ENCODE measurements at regions of chr15 and their contacts with region 1.

Region 1: GRCh38 chr15:55637086-55637485 is 48.9 kb upstream of the PYGO1 start:
- DNase-seq: no peak
- ATAC-seq: no peak
- H3K4me3 ChIP-seq: no peak overlapping the region
- H3K27ac ChIP-seq: no peak overlapping the region
- H3K4me1 ChIP-seq: no peaks in the 10 kb centered on the region
- H3K27me3 ChIP-seq: no peaks in the 10 kb centered on the region
- CTCF ChIP-seq: no peak
- POLR2A ChIP-seq: no peak
- RAD21 ChIP-seq: no peak

Region 2: GRCh38 chr15:55526559-55527036 is 110.5 kb before region 1 on chr15:
- CTCF ChIA-PET with region 1: interaction called, 3 read pairs
- POLR2A ChIA-PET with region 1: no interaction called
- dilution Hi-C with region 1: no loop called
- in situ Hi-C with region 1: loop called (anchors 5 kb)
- intact Hi-C with region 1: loop called (anchors 1 kb)
- DNase-seq: peak; percentile 71
- ATAC-seq: peak; percentile 89
- H3K4me3 ChIP-seq: no peak overlapping the region
- H3K27ac ChIP-seq: no peak overlapping the region
- H3K4me1 ChIP-seq: peaks cover 2% of the 10 kb centered on the region
- H3K27me3 ChIP-seq: peaks cover 6% of the 10 kb centered on the region; the same call in 1 of the 2 replicates
- CTCF ChIP-seq: peak; percentile 70
- POLR2A ChIP-seq: no peak
- RAD21 ChIP-seq: peak; percentile 69

Region 3: DNA sequence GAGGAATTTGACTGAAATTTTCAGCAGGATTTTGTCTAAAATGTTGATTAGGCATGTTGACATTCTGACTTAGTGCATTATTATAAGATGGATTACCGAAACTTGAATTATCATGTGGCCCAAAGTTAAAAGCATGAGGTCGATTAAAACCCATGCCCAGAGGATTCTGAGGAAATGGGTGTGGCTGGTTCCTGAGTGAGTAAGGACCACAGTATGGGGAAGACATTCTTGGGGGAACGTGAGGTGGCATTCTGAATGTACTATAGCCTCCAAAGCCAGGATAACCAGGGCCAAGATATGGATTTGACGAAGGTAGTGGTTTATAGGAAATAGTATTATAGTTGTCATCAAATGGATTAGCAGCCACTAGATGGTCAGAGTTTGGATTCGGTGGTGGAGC is 90.4 kb before region 1 on chr15:
- CTCF ChIA-PET with region 1: no interaction called
- POLR2A ChIA-PET with region 1: no interaction called
- dilution Hi-C with region 1: no loop called
- in situ Hi-C with region 1: no loop called
- intact Hi-C with region 1: no loop called
- DNase-seq: peak; percentile 4
- ATAC-seq: no peak
- H3K4me3 ChIP-seq: no peak overlapping the region
- H3K27ac ChIP-seq: no peak overlapping the region
- H3K4me1 ChIP-seq: no peaks in the 10 kb centered on the region
- H3K27me3 ChIP-seq: no peaks in the 10 kb centered on the region
- CTCF ChIP-seq: no peak
- POLR2A ChIP-seq: no peak
- RAD21 ChIP-seq: no peak

Region 4: GRCh38 chr15:55564347-55565145 is 72.5 kb before region 1 on chr15:
- CTCF ChIA-PET with region 1: no interaction called
- POLR2A ChIA-PET with region 1: no interaction called
- dilution Hi-C with region 1: no loop called
- in situ Hi-C with region 1: no loop called
- intact Hi-C with region 1: no loop called
- DNase-seq: no peak
- ATAC-seq: no peak
- H3K4me3 ChIP-seq: no peak overlapping the region
- H3K27ac ChIP-seq: no peak overlapping the region
- H3K4me1 ChIP-seq: no peaks in the 10 kb centered on the region
- H3K27me3 ChIP-seq: no peaks in the 10 kb centered on the region
- CTCF ChIP-seq: no peak
- POLR2A ChIP-seq: no peak
- RAD21 ChIP-seq: no peak

Region 5: DNA sequence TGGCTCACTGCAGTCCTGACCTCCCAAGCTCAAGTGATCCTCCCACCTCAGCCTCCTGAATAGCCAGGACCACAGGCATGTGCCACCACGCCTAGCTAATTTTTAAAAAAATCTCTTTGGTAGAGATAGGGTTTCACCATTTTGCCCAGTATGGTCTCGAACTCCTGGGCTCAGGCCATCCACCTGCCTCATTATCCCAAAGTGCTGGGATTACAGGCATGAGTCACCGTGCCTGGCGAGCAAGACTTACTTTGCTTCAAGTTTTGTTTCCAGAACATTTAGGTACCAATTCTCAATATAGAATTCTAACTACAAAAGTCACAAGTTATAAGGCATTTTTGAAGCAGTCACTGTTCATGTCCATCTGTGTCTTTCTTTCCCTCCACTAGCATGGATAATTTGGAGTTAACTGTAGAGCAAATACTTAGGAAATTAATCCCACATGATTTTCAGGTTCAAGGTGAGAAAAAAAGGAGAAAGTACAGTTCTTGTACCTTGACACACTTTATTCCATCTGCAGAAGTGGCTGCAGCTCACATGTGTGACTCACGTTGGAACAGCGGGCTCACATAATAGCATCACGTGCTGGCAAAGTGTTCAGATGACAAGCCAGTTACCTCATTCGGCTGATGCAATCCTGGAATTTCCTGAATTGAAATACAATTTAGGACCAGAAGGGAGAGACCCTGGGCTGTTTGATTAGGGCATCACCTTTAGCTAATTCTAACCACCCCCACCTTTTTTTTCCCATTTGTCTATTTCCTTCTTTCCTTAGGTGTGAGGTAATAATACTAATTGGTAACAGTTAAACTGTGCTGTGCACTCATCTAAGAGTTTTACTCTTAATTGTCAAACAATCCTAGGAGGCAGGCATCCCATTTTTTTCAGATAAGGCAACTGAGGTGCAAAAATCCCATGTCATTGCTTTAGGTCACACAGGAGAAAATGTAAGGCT is 403.3 kb after region 1 on chr15:
- CTCF ChIA-PET with region 1: no interaction called
- POLR2A ChIA-PET with region 1: no interaction called
- dilution Hi-C with region 1: no loop called
- in situ Hi-C with region 1: no loop called
- intact Hi-C with region 1: no loop called
- DNase-seq: peak; percentile 98
- ATAC-seq: peak; percentile 81
- H3K4me3 ChIP-seq: no peak overlapping the region
- H3K27ac ChIP-seq: peak overlapping the region; percentile 98
- H3K4me1 ChIP-seq: peaks cover 16% of the 10 kb centered on the region
- H3K27me3 ChIP-seq: no peaks in the 10 kb centered on the region
- CTCF ChIP-seq: no peak
- POLR2A ChIP-seq: no peak
- RAD21 ChIP-seq: no peak

Measured in IMR-90 (cell line).